H1 (cell line): ENCODE measurements at regions of chr11 and their contacts with region 1.

Region 1: DNA sequence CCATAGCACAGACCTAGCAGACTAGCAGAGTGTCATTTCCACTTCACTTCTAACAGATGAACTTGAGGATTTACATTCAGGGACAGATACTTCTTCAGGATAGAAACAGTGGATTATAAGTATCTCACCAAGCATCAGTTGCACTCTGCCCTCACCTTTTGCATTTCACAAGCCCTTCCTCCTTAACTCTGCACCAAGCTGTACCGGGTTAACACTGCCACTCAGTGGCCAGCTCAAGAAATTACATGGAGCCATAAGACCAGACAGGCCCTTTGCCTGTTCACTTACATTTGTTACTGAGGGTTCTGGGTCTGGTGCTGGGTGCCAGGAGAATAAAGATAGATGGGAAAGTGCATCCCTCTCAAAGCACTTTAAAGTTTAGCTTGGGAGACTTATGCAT is 309.8 kb downstream of the SHANK2 start:
- DNase-seq: peak in 1 of 2 experiments; percentile 66
- H3K4me3 ChIP-seq: no peak overlapping the region
- H3K27ac ChIP-seq: no peak overlapping the region
- H3K4me1 ChIP-seq: peaks cover 0 to 3% (median 0%) of the 10 kb centered on the region in 4 experiments; a peak in 1 of 7 replicates
- H3K27me3 ChIP-seq: no peaks in the 10 kb centered on the region
- CTCF ChIP-seq: peak; percentile 47 to 77 (median 61)
- EP300 ChIP-seq: no peak
- POLR2A ChIP-seq: no peak
- RAD21 ChIP-seq: peak; percentile 72 to 74

Region 2: GRCh38 chr11:70790653-70791300 is 151.8 kb before region 1 on chr11:
- CTCF ChIA-PET with region 1: interaction called, 12 read pairs
- POLR2A ChIA-PET with region 1: no interaction called
- DNase-seq: peak; percentile 19 to 66
- H3K4me3 ChIP-seq: no peak overlapping the region
- H3K27ac ChIP-seq: no peak overlapping the region
- H3K4me1 ChIP-seq: no peaks in the 10 kb centered on the region
- H3K27me3 ChIP-seq: no peaks in the 10 kb centered on the region; a peak in 1 of 7 replicates
- CTCF ChIP-seq: peak; percentile 75 to 83 (median 79)
- EP300 ChIP-seq: no peak
- POLR2A ChIP-seq: no peak
- RAD21 ChIP-seq: peak; percentile 76 to 80

Region 3: GRCh38 chr11:70826541-70827335 is 115.9 kb before region 1 on chr11:
- CTCF ChIA-PET with region 1: interaction called, 30 read pairs
- POLR2A ChIA-PET with region 1: no interaction called
- DNase-seq: peak in 1 of 2 experiments; percentile 69
- H3K4me3 ChIP-seq: 0 out of 8 replicates have a peak overlapping the region, but pooled peaks of 1 of the 4 experiments have one; percentile 2
- H3K27ac ChIP-seq: no peak overlapping the region
- H3K4me1 ChIP-seq: peaks cover 3 to 14% (median 7%) of the 10 kb centered on the region in 4 experiments; a peak in 5 of 7 replicates
- H3K27me3 ChIP-seq: no peaks in the 10 kb centered on the region
- CTCF ChIP-seq: no peak
- EP300 ChIP-seq: no peak
- POLR2A ChIP-seq: no peak
- RAD21 ChIP-seq: peak in 1 of 2 experiments; percentile 6; a peak in 1 of 4 replicates

Region 4: GRCh38 chr11:70834277-70834940 is 108.2 kb before region 1 on chr11:
- CTCF ChIA-PET with region 1: interaction called, 13 read pairs
- POLR2A ChIA-PET with region 1: no interaction called
- DNase-seq: no peak
- H3K4me3 ChIP-seq: peak overlapping the region in 1 of 4 experiments; percentile 32; a peak in 1 of 8 replicates
- H3K27ac ChIP-seq: 0 out of 2 replicates have a peak overlapping the region, but pooled peaks have one; percentile 34
- H3K4me1 ChIP-seq: peaks cover 6 to 22% (median 12%) of the 10 kb centered on the region in 4 experiments
- H3K27me3 ChIP-seq: no peaks in the 10 kb centered on the region
- CTCF ChIP-seq: no peak
- EP300 ChIP-seq: peak in 1 of 2 experiments; percentile 77; a peak in 1 of 3 replicates
- POLR2A ChIP-seq: no peak
- RAD21 ChIP-seq: peak in 1 of 2 experiments; percentile 17; a peak in 1 of 4 replicates

Region 5: DNA sequence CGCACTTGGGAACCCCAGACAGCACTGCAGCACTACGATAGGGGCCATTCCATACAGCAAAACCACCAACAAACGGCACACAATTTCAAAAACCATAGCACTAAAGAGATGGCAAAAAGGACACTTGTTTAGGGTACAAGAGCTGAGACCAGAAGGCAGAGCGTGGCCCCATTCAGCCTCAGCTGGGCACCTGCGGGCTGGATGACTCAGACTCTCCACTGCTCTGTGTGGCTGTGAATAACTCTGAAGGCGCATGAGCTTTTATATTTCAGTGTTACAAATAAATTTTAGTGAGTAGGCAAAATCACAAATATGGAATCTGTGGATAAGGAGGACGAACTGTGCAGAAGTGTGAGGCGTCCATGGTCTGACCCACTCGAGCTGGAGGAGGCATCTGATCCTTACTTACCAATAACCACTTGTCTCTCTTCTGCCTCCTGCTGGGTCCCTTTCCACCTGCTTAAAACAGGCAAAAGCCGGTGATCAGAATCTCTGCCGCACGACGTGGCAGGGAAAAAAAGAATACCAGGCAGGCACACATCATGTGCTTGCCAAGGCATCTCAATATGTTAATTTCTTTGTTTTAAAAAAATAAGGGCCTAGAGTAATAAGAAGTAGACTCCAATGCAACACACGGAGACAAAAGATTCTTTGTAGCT is 15.9 kb before region 1 on chr11:
- CTCF ChIA-PET with region 1: interaction called, 29 read pairs
- POLR2A ChIA-PET with region 1: no interaction called
- DNase-seq: no peak
- H3K4me3 ChIP-seq: no peak overlapping the region
- H3K27ac ChIP-seq: peak overlapping the region; percentile 51; the same call in 1 of the 2 replicates
- H3K4me1 ChIP-seq: peaks cover 3 to 14% (median 4%) of the 10 kb centered on the region in 4 experiments; a peak in 5 of 7 replicates
- H3K27me3 ChIP-seq: no peaks in the 10 kb centered on the region
- CTCF ChIP-seq: peak in 2 of 3 experiments; percentile 30 to 34; a peak in 2 of 4 replicates
- EP300 ChIP-seq: no peak
- POLR2A ChIP-seq: no peak
- RAD21 ChIP-seq: peak in 1 of 2 experiments; percentile 35; a peak in 2 of 4 replicates

Region 6: DNA sequence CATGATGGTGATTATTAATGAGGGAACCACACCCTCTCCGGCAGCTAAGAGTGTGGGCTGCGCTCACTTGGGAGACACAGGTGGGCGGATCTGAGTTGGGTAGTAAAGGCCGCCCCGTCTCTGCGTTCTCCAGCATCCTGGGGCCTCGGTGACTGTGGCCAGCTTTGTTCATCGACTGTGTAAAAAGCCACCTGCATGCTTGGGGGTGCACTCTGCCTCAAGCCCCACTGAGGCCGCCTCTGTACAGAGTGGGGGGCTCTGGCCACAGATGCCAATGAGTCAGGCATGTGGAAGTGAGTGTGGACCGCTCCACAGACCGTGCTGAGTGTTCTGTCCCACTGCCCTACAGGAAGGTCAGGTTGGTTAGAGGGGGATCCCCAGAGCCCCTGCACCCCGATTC is 117.1 kb after region 1 on chr11:
- CTCF ChIA-PET with region 1: interaction called, 10 read pairs
- POLR2A ChIA-PET with region 1: no interaction called
- DNase-seq: no peak
- H3K4me3 ChIP-seq: no peak overlapping the region
- H3K27ac ChIP-seq: no peak overlapping the region
- H3K4me1 ChIP-seq: no peaks in the 10 kb centered on the region; a peak in 1 of 7 replicates
- H3K27me3 ChIP-seq: no peaks in the 10 kb centered on the region
- CTCF ChIP-seq: no peak
- EP300 ChIP-seq: no peak
- POLR2A ChIP-seq: no peak
- RAD21 ChIP-seq: no peak